ENCODE measurements at regions of chr2 and their contacts with region 1.

Region 1: GRCh38 chr2:47334356-47335136 is 68.4 kb upstream of the MSH2 start:
- DNase-seq: no peak
- H3K4me3 Mint-ChIP-seq: no peak overlapping the region
- H3K27ac Mint-ChIP-seq: no peak overlapping the region
- H3K4me1 Mint-ChIP-seq: no peaks in the 10 kb centered on the region
- H3K27me3 Mint-ChIP-seq: peaks cover 9% of the 10 kb centered on the region

Region 2: DNA sequence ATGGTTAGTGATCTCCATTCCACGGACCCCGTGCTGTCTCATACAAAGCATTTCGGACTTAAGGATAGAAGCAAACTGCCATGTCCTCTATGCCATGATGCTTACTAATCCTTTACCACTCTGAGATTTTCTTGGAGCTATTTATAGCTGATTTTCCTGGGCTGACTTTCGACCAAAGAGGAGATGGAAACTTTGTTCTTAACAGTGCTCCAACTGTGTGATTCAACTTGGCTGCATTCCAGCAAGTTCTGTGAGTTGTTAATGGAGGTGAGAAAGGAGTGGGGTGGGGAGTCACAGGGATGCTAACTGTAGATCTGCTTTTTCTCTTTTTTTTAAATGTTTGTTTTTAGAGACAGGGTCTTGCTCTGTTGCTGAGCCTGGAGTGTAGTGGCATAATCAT is 22.9 kb after region 1 on chr2:
- intact Hi-C with region 1: no loop called
- DNase-seq: no peak
- H3K4me3 Mint-ChIP-seq: no peak overlapping the region
- H3K27ac Mint-ChIP-seq: no peak overlapping the region
- H3K4me1 Mint-ChIP-seq: peaks cover 4% of the 10 kb centered on the region
- H3K27me3 Mint-ChIP-seq: no peaks in the 10 kb centered on the region

Region 3: DNA sequence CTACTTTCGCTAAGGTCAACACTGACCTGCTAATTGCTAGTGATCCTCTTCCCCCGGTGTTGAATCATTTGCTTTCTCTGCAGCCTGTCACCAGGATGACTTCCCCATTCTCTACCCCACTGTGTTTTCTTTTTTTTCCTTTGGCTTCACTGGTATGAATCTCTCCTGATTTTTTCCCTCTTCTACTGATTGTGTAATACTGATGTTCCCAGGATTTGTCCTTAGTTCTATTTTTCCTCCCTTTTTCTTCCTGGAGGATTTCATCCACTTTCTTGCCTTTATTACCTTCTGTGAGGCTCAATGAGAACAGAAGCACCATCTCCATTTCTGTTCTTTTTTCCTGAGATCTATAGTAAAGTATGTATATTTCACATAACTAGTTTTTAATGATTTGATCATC is 54.3 kb after region 1 on chr2:
- intact Hi-C with region 1: loop called (anchors 1 kb)
- DNase-seq: no peak
- H3K4me3 Mint-ChIP-seq: no peak overlapping the region
- H3K27ac Mint-ChIP-seq: no peak overlapping the region
- H3K4me1 Mint-ChIP-seq: peaks cover 4% of the 10 kb centered on the region
- H3K27me3 Mint-ChIP-seq: peaks cover 31% of the 10 kb centered on the region

Region 4: DNA sequence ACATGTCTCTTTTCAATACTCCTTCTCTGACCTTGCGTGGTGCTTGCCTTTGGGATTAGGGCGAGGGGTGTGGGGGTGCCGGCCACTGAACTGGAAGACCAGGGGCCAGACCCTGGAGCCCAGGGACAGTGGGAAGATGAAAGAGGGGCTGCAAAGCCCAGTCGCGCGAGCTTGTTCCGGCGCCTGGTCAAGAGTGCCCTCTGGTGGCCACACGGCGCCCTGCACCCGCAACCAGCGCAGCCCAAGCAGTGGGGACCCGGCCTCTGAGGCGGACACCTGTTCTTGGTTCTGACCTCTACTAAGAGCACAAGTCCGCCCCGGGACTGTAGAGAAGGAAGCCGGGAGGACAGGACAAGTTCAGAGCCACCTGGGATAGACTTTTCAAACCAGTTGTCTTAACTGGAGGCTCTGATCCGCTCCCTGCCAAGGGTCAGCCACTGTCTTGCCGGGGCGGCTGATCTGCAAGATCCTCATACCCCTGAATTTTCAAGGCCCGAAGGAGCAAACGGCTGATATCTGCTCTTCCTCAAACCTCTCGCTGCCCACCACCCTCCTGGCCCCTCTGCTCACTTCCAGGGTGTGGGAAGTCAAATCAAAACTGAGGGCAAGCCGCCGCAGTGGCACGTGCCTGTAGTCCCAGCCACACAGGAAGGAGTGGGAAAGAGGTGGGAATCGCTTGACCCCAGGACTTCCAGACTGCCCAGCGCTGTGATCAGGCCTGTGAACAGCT is 433.5 kb after region 1 on chr2:
- intact Hi-C with region 1: loop called (anchors 2 kb)
- DNase-seq: peak; percentile 54
- H3K4me3 Mint-ChIP-seq: no peak overlapping the region
- H3K27ac Mint-ChIP-seq: no peak overlapping the region
- H3K4me1 Mint-ChIP-seq: peaks cover 2% of the 10 kb centered on the region
- H3K27me3 Mint-ChIP-seq: peaks cover 5% of the 10 kb centered on the region